Right ventricle myocardium inferior (tissue), 1 donor: ENCODE measurements at regions of chr10 and their contacts with region 1.

Region 1: DNA sequence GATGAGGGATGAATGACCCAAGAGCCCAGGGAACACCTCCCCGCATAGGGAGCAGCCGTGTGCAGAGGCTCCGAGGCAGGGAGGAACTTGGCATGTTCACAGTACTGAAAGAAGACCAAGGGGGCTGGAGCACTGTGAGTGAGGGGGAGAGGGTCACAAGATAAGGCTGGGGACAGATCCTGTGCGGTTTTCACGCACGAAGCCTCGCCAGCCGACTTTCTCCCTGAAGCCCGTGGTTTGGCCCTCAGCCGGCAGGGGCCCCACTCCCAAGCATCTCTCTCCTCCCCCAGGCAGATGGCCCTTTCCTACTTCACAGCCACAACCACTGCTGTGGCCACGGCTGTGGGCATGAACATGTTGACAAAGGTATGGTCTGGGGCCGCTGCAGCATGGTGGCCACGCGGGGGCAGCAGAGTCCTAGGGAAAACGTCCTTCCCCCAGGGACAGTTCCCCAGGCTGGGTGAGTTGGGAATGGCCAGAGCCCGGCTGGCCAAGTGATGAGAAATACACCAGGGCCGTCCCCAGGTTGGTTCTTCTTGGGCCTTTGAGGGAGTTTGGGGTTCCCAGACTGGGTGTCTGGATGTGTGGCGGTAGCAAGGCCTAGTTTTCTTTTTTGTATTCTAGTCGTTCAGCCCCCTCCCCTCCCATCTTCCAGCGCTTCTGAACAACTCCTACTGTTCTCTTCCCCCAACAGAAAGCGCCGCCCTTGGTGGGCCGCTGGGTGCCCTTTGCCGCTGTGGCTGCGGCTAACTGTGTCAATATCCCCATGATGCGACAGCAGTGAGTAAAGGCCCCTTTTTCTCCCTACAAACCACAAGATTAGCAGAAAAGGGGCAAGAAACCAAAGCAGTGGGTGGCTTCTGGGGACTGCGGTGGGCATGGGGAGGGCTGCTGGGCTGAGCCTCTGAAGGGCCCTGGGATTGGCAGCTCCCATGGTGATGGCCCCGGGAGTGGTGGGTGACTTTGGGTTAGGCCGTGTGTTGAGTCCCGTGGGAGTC is 14.4 kb upstream of the WBP1L start:
- DNase-seq: peak; percentile 94
- ATAC-seq: peak; percentile 92

Region 2: DNA sequence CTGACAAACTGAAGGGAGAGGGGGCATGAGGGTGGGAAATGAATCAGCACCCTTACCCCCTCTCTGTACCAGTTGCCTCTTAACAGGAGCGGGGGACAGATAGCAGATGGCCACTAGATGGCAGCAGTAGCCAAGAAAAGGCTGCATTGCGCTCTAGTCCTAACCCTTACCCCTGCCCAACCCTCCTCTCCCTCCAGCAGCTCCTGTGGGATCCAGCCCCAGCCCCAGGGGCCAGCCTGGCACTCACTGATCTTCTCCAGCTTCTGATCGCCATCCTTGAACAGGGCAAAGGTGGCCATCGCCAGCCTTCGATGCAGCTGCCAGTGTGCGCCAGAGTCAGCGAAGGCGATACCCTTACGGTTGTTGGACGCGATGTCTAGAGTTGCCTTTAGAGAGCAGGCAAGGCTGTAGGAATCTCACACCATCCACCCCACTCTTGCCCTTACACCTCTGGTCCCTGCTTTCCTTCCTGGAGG is 105.7 kb after region 1 on chr10:
- intact Hi-C with region 1: loop called (anchors 2 kb)
- DNase-seq: peak; percentile 73
- ATAC-seq: peak; percentile 95

Region 3: DNA sequence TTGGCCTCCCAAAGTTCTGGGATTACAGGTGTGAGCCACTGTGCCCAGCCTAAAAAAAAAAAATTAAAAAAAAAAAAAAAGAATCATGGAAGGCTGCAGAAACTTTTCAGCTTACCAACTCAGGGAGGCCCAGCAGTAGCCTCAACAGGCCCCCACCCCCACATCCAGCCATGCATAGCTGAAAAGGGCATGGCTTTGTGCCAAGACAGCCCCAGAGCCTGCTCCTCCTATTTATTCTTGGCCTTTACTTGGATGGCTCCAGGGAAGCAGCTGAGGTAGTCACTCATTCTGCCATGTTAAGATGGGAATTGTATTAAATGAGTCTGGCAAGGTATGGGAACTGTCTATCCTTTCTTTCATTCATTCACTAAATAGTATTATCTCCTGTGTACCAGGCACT is 175.0 kb after region 1 on chr10:
- intact Hi-C with region 1: loop called (anchors 1 kb)
- DNase-seq: no peak
- ATAC-seq: no peak

Region 4: DNA sequence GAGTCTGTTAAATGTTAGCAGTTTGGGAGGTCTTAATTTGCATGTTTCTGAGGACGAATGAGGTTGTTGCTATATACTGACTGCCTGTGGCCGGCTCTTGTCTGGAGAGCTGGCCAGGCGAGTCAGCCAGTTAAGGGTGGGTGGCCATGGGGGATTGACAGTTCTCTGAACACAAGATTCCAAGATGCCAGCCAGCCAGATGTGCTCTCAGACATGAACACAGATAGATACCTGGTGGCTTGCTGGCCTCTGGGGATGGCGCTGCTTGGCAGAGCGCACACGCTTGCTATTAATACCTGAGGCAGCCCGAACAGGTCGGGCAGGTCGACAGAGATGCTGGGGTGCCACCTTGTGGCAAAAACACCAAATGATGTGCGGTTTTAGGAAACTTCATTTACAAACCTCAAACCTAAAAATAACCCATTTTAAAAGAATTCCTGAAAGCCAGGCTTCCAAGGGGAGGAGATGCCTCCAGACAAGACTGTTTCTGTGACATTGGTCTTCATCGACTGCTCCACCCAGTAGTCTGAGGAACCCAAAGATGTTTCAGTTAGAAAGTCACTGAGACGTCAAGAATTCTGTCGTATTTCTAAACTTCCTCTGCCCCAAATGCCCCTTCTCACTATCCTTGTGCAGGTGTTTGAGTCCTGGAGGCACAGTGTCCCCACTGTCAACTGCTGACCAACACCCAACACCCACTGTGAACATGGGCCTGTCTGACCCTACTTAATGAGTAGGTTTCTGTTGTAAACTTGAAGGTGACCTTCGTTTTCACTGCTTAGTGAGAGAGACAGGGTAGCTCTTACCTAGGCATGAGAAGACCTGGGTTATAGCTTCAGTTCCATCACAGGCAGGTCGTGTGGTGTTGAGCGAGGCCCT is 340.4 kb after region 1 on chr10:
- intact Hi-C with region 1: loop called (anchors 10 kb)
- DNase-seq: no peak
- ATAC-seq: peak; percentile 71